ENCODE measurements at regions of chr12 and their contacts with region 1.

Region 1: DNA sequence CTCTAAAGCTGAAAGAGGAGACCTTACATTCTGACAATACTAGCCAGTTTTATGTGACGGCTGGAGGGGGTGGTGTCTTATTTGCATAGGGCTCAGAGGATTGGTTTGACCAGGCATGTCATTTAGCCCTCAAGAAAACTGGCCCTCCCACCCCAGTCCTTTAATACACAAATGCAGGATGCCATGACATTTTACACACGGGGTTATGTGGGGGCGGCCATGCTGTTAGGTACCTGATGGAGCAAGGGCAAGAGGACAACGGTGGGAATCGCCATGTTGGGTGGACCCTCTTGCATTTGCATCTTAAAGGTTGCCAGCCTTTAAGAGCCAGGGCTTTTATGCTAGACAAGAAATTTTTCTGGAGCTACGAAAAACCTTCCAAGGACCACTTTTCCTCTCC is 23.3 kb downstream of the MDM2 start:
- DNase-seq: no peak
- H3K4me3 Mint-ChIP-seq: no peak overlapping the region
- H3K27ac Mint-ChIP-seq: no peak overlapping the region
- H3K4me1 Mint-ChIP-seq: peaks cover 17% of the 10 kb centered on the region
- H3K27me3 Mint-ChIP-seq: no peaks in the 10 kb centered on the region

Region 2: GRCh38 chr12:68733661-68734071 is 97.6 kb before region 1 on chr12:
- CTCF ChIA-PET with region 1: no interaction called
- POLR2A ChIA-PET with region 1: no interaction called
- DNase-seq: no peak
- H3K4me3 Mint-ChIP-seq: no peak overlapping the region
- H3K27ac Mint-ChIP-seq: peak overlapping the region; percentile 13
- H3K4me1 Mint-ChIP-seq: no peaks in the 10 kb centered on the region
- H3K27me3 Mint-ChIP-seq: no peaks in the 10 kb centered on the region

Region 3: GRCh38 chr12:68807576-68808387 is 23.5 kb before region 1 on chr12 and contains the start of gene MDM2:
- CTCF ChIA-PET with region 1: interaction called, 24 read pairs
- POLR2A ChIA-PET with region 1: no interaction called
- DNase-seq: peak; percentile 98
- H3K4me3 Mint-ChIP-seq: peak within 1 kb of the TSS; percentile 93
- H3K27ac Mint-ChIP-seq: peak within 1 kb of the TSS; percentile 100
- H3K4me1 Mint-ChIP-seq: peaks cover 53% of the 10 kb centered on the region
- H3K27me3 Mint-ChIP-seq: no peaks in the 10 kb centered on the region
- total RNA-seq, gene MDM2: 207 to 214 TPM

Region 4: DNA sequence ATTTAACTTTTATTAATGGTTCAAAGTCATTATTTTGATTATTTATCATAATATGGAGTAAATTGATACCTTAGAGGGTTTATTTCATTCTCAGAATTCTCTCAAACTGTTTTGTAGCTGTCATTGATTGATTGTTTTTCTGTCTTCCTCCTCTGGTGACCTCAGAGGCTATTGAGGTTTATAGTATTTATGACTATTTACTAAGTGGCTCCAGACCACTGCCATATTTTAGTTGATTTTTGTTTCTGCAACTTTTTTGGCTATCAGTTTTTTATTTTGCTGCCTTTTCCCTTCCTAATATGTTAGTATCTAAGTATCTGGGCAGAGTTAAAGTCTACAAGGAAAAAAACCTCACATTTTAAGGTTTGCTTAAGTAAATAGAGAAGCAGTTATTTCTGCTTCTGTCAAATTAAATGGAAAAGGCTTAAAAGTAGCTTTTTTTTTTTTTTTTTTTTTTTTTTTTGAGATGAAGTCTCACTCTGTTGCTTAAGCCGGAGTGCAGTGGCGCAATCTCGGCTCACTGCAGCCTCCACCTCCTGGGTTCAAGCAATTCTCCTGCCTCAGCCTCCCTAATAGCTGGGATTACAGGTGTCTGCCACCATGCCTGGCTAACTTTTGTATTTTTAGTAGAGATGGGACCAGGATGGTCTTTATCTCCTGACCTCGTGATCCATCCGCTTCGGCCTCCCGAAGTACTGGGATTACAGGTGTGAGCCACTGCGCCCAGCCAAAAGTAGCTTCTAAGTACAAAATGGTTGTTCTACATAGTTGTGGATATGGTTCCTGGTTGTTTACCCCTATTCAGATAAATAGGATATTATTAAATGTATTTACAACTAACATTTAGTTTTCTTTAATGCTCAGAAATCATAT is 15.1 kb before region 1 on chr12:
- CTCF ChIA-PET with region 1: interaction called, 24 read pairs
- POLR2A ChIA-PET with region 1: interaction called, 4 read pairs
- DNase-seq: no peak
- H3K4me3 Mint-ChIP-seq: no peak overlapping the region
- H3K27ac Mint-ChIP-seq: no peak overlapping the region
- H3K4me1 Mint-ChIP-seq: peaks cover 63% of the 10 kb centered on the region
- H3K27me3 Mint-ChIP-seq: no peaks in the 10 kb centered on the region

Region 5: GRCh38 chr12:69097619-69098368 is 266.5 kb after region 1 on chr12:
- CTCF ChIA-PET with region 1: no interaction called
- POLR2A ChIA-PET with region 1: no interaction called
- DNase-seq: no peak
- H3K4me3 Mint-ChIP-seq: no peak overlapping the region
- H3K27ac Mint-ChIP-seq: no peak overlapping the region
- H3K4me1 Mint-ChIP-seq: no peaks in the 10 kb centered on the region
- H3K27me3 Mint-ChIP-seq: peaks cover 5% of the 10 kb centered on the region